ENCODE measurements at regions of chr1 and their contacts with region 1.

Region 1: DNA sequence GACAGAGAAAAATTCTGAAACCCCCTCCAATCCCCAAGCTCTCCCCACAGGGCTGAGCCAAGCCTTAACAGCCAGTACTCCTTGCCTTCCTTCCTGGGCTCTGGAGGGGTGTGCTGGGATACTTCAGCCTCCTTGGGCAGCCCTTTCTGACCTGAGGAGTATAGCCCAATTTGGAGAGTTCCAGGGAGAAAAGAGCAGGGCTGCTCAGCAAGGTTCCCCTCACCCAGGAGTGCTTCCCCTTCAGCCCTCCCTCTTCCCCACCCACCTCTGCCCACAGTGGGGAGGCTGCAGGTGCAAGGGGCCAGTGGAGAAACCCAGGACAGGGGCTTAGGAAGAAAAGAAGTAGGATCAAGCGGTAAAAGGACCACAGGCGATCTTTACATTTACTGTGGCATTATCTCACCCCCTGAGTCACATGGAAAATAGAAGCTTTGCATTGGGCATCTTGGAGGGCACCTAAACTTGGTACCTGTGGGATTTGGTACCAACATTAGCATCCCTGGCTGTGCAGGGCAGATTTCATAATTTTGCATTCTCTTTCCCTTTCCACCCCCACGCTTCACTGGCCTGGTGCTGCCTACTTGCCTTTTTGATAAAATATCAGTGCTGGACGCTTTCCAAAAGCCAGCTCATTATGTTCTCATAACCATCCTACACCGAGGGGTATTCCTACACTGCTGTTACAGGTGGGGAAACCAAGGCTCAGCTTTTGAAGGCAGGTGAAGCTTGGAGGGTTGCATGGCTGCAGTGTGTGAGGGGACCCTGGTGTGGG is 2.8 kb upstream of the ADORA1 start:
- DNase-seq: no peak
- H3K4me3 ChIP-seq: no peak overlapping the region
- H3K27ac ChIP-seq: no peak overlapping the region
- H3K4me1 ChIP-seq: peaks cover 3 to 13% of the 10 kb centered on the region in 2 donors
- H3K27me3 ChIP-seq: no peaks in the 10 kb centered on the region
- CTCF ChIP-seq: no peak
- POLR2A ChIP-seq: no peak

Region 2: GRCh38 chr1:203214871-203215270 is 90.1 kb after region 1 on chr1:
- intact Hi-C with region 1: loop called (anchors 5 kb)
- DNase-seq: no peak
- H3K4me3 ChIP-seq: no peak overlapping the region
- H3K27ac ChIP-seq: no peak overlapping the region
- H3K4me1 ChIP-seq: no peaks in the 10 kb centered on the region
- H3K27me3 ChIP-seq: no peaks in the 10 kb centered on the region
- CTCF ChIP-seq: no peak
- POLR2A ChIP-seq: no peak